ENCODE measurements at regions of chr21 and their contacts with region 1.

Region 1: GRCh38 chr21:35528116-35529042 is 479.3 kb upstream of the RUNX1 start:
- DNase-seq: peak; percentile 80
- H3K4me3 Mint-ChIP-seq: peak overlapping the region; percentile 82
- H3K27ac Mint-ChIP-seq: peak overlapping the region; percentile 87
- H3K4me1 Mint-ChIP-seq: peaks cover 46% of the 10 kb centered on the region
- H3K27me3 Mint-ChIP-seq: no peaks in the 10 kb centered on the region

Region 2: DNA sequence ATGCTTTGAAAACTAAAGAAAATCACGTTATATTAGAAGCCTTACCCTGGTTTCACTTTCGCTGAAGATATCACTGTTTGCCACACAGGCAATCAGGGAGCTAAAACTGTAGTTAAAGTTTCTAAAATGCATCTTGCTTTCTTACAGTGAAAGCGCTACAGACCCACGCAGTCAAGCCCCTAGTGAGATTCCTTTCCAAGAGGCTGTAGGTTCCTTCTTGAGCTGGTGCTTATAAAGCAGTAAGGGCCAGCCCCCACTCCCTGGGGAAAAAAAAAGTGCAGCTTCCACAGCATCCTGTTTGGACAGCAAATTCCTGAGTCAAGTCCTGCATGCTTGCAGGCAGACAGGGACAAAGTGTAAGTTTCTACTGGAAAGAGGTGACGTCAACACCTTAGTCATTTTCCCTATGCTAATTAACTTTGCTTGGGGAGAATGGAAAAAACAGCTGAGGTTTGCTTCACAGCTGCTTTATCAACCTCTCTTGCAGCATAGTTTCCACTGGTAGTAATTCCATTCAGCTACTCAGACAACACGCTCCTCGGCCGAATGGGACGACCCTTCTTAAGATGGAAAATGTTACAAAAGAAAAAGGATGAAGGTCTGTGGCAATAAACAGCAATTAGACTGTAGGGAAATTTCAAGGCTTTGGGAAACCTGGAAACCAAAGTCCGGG is 1001.6 kb before region 1 on chr21:
- CTCF ChIA-PET with region 1: no interaction called
- intact Hi-C with region 1: loop called (anchors 5 kb)
- DNase-seq: peak; percentile 57
- H3K4me3 Mint-ChIP-seq: peak overlapping the region; percentile 55
- H3K27ac Mint-ChIP-seq: peak overlapping the region; percentile 56
- H3K4me1 Mint-ChIP-seq: peaks cover 30% of the 10 kb centered on the region
- H3K27me3 Mint-ChIP-seq: no peaks in the 10 kb centered on the region

Region 3: GRCh38 chr21:35428489-35428888 is 99.9 kb before region 1 on chr21:
- CTCF ChIA-PET with region 1: no interaction called
- intact Hi-C with region 1: loop called (anchors 5 kb)
- DNase-seq: peak; percentile 65
- H3K4me3 Mint-ChIP-seq: peak overlapping the region; percentile 42
- H3K27ac Mint-ChIP-seq: peak overlapping the region; percentile 71
- H3K4me1 Mint-ChIP-seq: peaks cover 34% of the 10 kb centered on the region
- H3K27me3 Mint-ChIP-seq: no peaks in the 10 kb centered on the region

Region 4: DNA sequence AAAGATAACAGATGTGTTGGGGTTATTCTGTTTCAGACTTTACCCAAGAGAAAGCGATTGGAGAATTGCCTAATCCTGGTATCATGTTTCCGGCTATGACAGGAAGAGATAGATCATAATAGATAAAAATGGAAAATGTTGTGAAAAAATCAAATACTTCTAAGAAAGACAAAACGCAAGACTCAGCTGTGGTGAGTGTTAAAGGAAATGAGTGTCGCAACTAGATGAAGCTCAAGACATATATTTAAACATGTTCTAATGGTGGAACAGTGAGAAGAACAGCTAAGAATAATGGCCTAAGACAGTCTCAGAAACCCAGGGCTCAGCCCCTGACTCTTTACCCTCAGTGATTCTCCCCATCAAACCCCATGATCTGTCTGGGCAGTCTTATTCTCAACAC is 52.6 kb before region 1 on chr21:
- CTCF ChIA-PET with region 1: interaction called, 3 read pairs
- intact Hi-C with region 1: loop called (anchors 5 kb)
- DNase-seq: peak; percentile 20
- H3K4me3 Mint-ChIP-seq: no peak overlapping the region
- H3K27ac Mint-ChIP-seq: peak overlapping the region; percentile 66
- H3K4me1 Mint-ChIP-seq: peaks cover 33% of the 10 kb centered on the region
- H3K27me3 Mint-ChIP-seq: no peaks in the 10 kb centered on the region

Region 5: DNA sequence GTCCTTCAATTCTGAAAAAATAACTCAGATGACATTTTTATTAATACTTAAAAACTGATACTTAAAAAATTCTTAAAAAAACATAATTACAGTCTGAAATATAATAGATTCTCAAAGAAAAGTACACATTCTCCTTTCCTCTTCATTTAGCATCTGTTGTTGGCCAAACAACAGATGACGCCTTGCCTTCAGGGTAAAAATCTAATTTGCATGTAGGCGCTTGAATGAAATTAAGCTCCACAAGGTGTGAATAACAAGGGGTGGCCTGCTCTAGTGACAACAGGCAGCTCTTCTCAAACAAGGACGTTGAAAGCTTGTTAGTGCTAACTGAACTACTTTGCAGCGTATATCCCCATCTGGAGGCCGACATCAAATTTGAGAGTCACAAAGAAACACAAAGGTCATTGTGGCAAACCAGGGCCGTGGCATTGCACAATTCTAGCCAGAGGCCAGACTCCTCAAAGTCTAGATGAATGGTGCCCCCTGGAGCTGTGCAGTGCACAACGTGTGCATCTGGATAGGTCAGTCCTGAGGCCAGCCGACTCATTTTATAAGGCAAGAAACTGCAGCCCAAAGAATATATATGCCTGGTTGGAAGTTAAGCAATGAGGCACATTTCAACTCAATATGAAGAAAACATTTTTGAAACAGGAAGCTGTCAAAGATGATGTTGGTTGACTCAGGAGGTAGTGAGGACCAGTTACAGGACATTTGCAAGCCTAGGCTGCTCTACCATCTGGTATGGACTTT is 20.1 kb before region 1 on chr21:
- CTCF ChIA-PET with region 1: interaction called, 4 read pairs
- intact Hi-C with region 1: loop called (anchors 1 kb)
- DNase-seq: peak; percentile 42
- H3K4me3 Mint-ChIP-seq: no peak overlapping the region
- H3K27ac Mint-ChIP-seq: no peak overlapping the region
- H3K4me1 Mint-ChIP-seq: peaks cover 58% of the 10 kb centered on the region
- H3K27me3 Mint-ChIP-seq: no peaks in the 10 kb centered on the region

Region 6: DNA sequence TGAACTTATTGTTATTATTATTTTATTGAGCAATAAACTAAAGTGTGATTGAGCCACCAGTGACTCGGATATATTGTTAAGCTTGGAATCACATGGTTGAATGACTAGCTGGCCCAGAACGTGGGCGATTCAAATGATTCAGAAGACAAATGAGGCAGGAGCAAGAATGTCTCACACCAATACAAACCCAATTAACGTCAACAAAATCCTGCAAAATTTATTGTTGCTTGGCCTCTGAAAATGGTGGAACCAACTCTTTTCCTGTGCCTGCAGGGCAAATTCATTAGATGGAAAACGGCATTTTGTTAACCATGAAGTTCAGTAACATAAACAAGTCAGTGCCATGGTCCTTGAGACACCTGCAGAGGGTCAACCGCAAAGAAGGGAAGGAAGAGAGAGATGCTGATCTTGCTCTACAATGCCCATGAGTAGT is 50.0 kb after region 1 on chr21:
- CTCF ChIA-PET with region 1: interaction called, 3 read pairs
- intact Hi-C with region 1: loop called (anchors 2 kb)
- DNase-seq: no peak
- H3K4me3 Mint-ChIP-seq: no peak overlapping the region
- H3K27ac Mint-ChIP-seq: no peak overlapping the region
- H3K4me1 Mint-ChIP-seq: peaks cover 26% of the 10 kb centered on the region
- H3K27me3 Mint-ChIP-seq: peaks cover 2% of the 10 kb centered on the region

Measured in activated naive CD4-positive, alpha-beta T cell treated with anti-CD3 and anti-CD28 coated beads for 36 hours (primary cell).